Gastrocnemius medialis (tissue), 4 donors: ENCODE measurements at regions of chr11 and their contacts with region 1.

Region 1: GRCh38 chr11:2092956-2093412 is 46.2 kb downstream of the IGF2 start:
- DNase-seq: peak; percentile 93 to 98
- ATAC-seq: peak; percentile 74 to 76
- H3K4me3 ChIP-seq: no peak overlapping the region
- H3K27ac ChIP-seq: peak overlapping the region; percentile 60 to 90 (median 74)
- H3K4me1 ChIP-seq: peaks cover 20 to 27% of the 10 kb centered on the region in 2 donors
- H3K27me3 ChIP-seq: no peaks in the 10 kb centered on the region
- CTCF ChIP-seq: no peak
- POLR2A ChIP-seq: no peak

Region 2: GRCh38 chr11:1820463-1821325 is 272.3 kb before region 1 on chr11:
- in situ Hi-C with region 1: no loop called
- intact Hi-C with region 1: no loop called
- DNase-seq: no peak
- ATAC-seq: no peak
- H3K4me3 ChIP-seq: no peak overlapping the region
- H3K27ac ChIP-seq: no peak overlapping the region
- H3K4me1 ChIP-seq: no peaks in the 10 kb centered on the region
- H3K27me3 ChIP-seq: no peaks in the 10 kb centered on the region
- CTCF ChIP-seq: no peak
- POLR2A ChIP-seq: no peak

Region 3: DNA sequence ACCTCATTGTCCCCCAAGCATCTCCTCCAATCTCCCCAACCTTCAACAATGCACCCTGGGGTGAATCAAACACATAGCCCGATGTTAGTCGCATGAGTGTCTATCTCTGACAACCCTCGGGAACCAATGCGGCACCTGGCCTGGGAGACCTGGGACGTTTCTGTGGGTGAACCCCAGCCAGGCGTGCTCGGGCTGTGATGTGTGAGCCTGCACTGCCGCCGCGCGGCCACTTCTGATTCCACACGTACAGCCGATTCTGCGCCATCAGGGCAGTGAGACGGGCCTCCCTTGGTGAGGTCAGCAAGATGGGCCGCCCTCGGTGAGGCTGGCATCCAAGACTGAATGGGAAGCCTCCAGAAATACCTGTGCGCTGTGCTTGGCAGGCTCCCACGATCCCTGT is 90.2 kb before region 1 on chr11:
- in situ Hi-C with region 1: no loop called
- intact Hi-C with region 1: no loop called
- DNase-seq: no peak
- ATAC-seq: no peak
- H3K4me3 ChIP-seq: no peak overlapping the region
- H3K27ac ChIP-seq: no peak overlapping the region
- H3K4me1 ChIP-seq: no peaks in the 10 kb centered on the region
- H3K27me3 ChIP-seq: no peaks in the 10 kb centered on the region
- CTCF ChIP-seq: no peak
- POLR2A ChIP-seq: no peak

Region 4: GRCh38 chr11:2036863-2037486 is 56.0 kb before region 1 on chr11:
- in situ Hi-C with region 1: no loop called
- intact Hi-C with region 1: no loop called
- DNase-seq: no peak
- ATAC-seq: peak; percentile 56 to 76
- H3K4me3 ChIP-seq: no peak overlapping the region
- H3K27ac ChIP-seq: no peak overlapping the region
- H3K4me1 ChIP-seq: no peaks in the 10 kb centered on the region
- H3K27me3 ChIP-seq: no peaks in the 10 kb centered on the region
- CTCF ChIP-seq: no peak
- POLR2A ChIP-seq: no peak

Region 5: GRCh38 chr11:2104524-2105440 is 11.8 kb after region 1 on chr11:
- in situ Hi-C with region 1: no loop called
- intact Hi-C with region 1: loop called (anchors 1 kb)
- DNase-seq: no peak
- ATAC-seq: peak; percentile 6 to 14
- H3K4me3 ChIP-seq: no peak overlapping the region
- H3K27ac ChIP-seq: peak overlapping the region; percentile 64 to 75 (median 71)
- H3K4me1 ChIP-seq: peaks cover 9 to 22% of the 10 kb centered on the region in 2 donors
- H3K27me3 ChIP-seq: no peaks in the 10 kb centered on the region
- CTCF ChIP-seq: no peak
- POLR2A ChIP-seq: no peak

Region 6: GRCh38 chr11:2142762-2143202 is 49.8 kb after region 1 on chr11:
- in situ Hi-C with region 1: no loop called
- intact Hi-C with region 1: loop called (anchors 5 kb)
- DNase-seq: no peak
- ATAC-seq: no peak
- H3K4me3 ChIP-seq: no peak overlapping the region
- H3K27ac ChIP-seq: no peak overlapping the region
- H3K4me1 ChIP-seq: peaks cover 7 to 8% of the 10 kb centered on the region in 2 donors
- H3K27me3 ChIP-seq: peaks cover 65 to 86% (median 79%) of the 10 kb centered on the region in 3 donors
- CTCF ChIP-seq: no peak
- POLR2A ChIP-seq: no peak